Activated CD4-positive, alpha-beta memory T cell treated with anti-CD3 and anti-CD28 coated beads for 36 hours (primary cell): ENCODE measurements at regions of chr1 and their contacts with region 1.

Region 1: DNA sequence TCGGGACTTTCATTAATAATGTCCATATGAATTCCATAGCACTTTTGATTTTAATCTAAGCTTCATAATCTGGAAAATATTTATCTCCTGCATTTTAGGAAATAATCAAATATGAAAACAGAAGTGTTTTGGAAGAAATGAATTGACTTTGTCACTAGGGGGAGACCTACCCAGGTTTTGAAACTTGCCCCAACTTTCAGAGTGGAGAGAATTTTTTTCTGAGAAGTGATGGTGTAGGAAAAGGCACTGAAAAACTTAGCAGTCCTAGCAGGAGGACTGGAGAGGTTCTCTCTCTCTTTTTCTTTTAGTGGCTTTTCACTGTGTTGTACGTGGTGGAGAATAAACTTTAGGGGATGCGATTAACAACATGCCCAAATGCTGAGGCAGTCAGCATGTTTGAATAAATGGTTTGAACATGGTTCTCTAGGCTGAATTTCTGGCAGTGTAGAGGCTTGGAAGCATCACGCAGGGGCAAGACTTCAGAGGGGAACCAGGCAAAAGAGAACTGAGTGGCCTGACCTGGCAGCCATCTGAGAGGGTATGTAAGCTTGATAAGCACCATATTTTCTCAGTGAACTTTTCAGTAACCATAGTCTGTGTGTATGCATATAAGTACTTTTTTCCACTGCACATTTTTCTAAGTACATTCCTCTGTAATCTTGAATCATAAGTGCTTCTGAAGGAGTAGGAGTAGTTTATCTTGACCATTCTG is 68.3 kb upstream of the NEK7 start:
- DNase-seq: no peak
- H3K4me3 Mint-ChIP-seq: no peak overlapping the region
- H3K27ac Mint-ChIP-seq: no peak overlapping the region
- H3K4me1 Mint-ChIP-seq: peaks cover 7% of the 10 kb centered on the region
- H3K27me3 Mint-ChIP-seq: peaks cover 2% of the 10 kb centered on the region

Region 2: DNA sequence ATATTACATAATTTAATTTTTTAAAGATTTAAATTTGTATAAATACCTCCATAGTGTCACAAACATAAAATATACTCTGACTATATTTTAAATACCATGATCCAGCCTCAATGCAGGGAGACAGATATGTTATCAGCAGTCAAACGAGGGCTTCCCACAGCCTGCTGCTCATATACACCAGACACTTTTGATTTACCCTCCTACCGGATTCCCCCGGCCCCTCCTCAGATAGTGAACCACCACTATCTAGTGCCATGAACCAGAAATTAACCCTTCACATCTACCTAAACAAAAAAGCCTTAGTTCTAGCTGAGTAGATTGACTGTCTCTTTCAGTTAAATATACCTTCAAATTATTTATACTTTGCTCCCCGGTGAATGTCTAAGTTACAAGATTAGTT is 238.5 kb before region 1 on chr1:
- CTCF ChIA-PET with region 1: no interaction called
- POLR2A ChIA-PET with region 1: no interaction called
- intact Hi-C with region 1: no loop called
- DNase-seq: no peak
- H3K4me3 Mint-ChIP-seq: no peak overlapping the region
- H3K27ac Mint-ChIP-seq: no peak overlapping the region
- H3K4me1 Mint-ChIP-seq: no peaks in the 10 kb centered on the region
- H3K27me3 Mint-ChIP-seq: peaks cover 5% of the 10 kb centered on the region

Region 3: DNA sequence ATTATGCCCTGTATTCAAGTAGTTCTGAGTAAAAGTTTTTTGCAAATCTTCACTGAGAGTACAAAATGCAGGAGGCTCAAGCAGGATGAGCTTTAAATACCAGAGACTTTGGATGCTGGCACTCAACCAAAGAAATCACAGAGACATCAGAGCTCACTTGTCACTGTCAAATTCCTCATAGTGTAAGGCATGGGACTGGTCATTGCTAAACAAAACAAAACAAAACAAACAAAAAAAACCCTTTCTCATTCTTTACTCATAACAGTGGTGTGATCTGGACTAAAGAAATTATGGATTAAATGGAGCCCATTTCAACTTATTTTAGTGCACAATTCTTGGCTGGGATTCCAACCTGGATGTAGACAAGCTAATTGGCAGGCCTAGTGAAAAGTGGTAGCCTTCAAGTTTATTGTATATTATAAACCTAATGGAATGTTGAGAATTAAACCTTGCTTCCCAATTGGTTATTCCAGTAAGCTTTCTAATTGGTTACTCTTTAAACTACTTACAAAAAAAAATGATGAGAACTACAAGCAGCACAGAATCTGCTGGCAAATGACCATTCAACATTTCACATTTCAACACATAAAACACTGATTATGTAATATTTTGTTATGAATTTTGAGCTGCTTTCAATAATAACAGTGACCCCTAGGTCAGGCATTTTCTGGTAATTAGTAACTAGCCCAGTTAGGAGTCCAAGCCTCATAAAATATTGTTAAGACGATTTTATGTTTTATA is 37.6 kb after region 1 on chr1:
- CTCF ChIA-PET with region 1: no interaction called
- POLR2A ChIA-PET with region 1: no interaction called
- intact Hi-C with region 1: loop called (anchors 5 kb)
- DNase-seq: no peak
- H3K4me3 Mint-ChIP-seq: no peak overlapping the region
- H3K27ac Mint-ChIP-seq: no peak overlapping the region
- H3K4me1 Mint-ChIP-seq: peaks cover 9% of the 10 kb centered on the region
- H3K27me3 Mint-ChIP-seq: peaks cover 3% of the 10 kb centered on the region

Region 4: DNA sequence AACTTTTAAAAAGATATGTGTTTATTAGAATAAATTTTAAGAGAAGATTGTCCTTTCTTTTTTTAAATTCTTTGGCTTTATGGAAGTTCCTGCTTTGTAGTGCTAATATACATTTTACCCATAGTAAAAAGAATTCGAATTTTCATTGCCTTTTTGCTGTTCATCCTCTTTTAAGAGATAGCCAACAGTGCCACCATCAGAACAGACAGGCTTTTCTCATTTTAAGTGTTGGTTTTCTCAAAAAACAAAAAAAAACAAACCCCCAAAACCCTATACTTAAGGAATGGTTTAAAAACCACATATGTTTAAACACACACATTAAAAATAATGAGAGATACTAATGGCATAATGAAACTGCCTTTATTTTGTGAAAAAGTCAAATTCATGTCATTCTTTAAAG is 187.1 kb after region 1 on chr1:
- CTCF ChIA-PET with region 1: no interaction called
- POLR2A ChIA-PET with region 1: no interaction called
- intact Hi-C with region 1: loop called (anchors 5 kb)
- DNase-seq: no peak
- H3K4me3 Mint-ChIP-seq: no peak overlapping the region
- H3K27ac Mint-ChIP-seq: no peak overlapping the region
- H3K4me1 Mint-ChIP-seq: peaks cover 11% of the 10 kb centered on the region
- H3K27me3 Mint-ChIP-seq: no peaks in the 10 kb centered on the region

Region 5: DNA sequence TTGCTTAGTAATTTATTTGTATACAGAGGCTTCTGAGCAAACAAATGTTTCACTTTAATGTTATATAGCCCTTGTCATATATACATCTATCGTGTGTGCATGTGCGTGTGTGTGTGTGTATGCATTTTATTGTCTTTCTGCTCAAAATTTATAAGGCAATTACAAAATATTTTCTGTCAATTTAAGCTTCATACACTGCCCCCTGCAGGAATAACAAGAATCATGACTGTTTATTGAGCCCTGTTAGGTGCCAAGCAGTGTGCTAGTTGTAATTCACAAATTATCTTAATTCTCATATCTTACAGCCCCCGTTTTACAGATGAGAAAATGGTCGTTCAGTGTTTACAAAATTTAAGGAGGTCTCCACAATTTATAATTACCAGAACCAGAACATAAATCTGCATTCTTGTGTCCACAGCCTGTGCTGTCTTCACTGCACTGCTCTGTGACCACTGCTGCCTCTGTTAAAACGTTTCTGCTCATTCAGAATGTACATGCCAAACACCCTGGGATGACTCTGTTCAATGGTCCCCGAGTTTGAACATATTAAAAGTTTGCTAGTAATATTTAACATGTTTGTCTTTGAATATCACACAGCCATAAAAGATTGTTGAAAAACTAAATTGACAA is 270.6 kb after region 1 on chr1:
- CTCF ChIA-PET with region 1: interaction called, 3 read pairs
- POLR2A ChIA-PET with region 1: no interaction called
- intact Hi-C with region 1: loop called (anchors 2 kb)
- DNase-seq: no peak
- H3K4me3 Mint-ChIP-seq: no peak overlapping the region
- H3K27ac Mint-ChIP-seq: no peak overlapping the region
- H3K4me1 Mint-ChIP-seq: peaks cover 8% of the 10 kb centered on the region
- H3K27me3 Mint-ChIP-seq: no peaks in the 10 kb centered on the region